Mammary epithelial cell (primary cell): ENCODE measurements at regions of chr16 and their contacts with region 1.

Region 1: DNA sequence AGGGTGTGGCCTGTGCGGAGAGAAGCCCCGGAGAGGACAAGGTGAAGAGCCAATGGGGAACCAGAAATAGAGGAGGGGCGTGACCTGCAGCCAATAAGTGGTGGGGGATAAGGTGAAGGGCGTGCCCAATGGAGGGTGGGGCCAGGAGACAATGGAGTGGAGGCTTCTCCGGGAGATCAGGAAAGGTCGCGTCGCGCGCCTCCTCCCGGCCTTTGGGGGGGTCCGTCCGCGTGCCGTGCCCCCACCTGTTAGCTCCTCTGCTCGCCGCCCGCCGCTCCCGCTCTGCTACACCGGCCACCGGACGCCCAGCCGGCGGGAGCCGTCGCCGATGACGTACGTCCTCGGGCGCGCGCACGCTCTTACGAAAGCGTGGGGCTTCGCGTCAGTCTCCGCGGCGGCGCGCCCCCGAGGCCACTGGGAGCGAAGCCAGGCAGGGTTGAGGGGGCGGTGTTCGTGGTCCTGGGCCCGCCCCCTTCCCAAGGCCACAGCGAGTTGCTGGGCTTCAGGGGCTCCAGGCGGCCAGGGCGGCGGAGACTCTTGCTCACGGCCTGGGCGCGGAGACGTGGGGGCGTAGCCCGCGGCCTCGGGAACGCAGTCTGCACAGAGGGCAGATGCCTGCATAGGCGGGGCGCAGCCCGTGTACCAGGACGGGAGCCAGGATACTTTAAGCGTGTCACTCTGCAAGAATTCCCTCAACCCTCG is at the start of gene MATCAP1:
- DNase-seq: peak; percentile 97
- H3K4me3 ChIP-seq: peak within 1 kb of the TSS; percentile 43 to 82 (median 69)
- H3K27ac ChIP-seq: peak within 1 kb of the TSS; percentile 76
- H3K4me1 ChIP-seq: peaks cover 49% of the 10 kb centered on the region
- H3K27me3 ChIP-seq: no peaks in the 10 kb centered on the region
- CTCF ChIP-seq: no peak
- total RNA-seq, gene MATCAP1: 8.0 to 24.9 TPM

Region 2: DNA sequence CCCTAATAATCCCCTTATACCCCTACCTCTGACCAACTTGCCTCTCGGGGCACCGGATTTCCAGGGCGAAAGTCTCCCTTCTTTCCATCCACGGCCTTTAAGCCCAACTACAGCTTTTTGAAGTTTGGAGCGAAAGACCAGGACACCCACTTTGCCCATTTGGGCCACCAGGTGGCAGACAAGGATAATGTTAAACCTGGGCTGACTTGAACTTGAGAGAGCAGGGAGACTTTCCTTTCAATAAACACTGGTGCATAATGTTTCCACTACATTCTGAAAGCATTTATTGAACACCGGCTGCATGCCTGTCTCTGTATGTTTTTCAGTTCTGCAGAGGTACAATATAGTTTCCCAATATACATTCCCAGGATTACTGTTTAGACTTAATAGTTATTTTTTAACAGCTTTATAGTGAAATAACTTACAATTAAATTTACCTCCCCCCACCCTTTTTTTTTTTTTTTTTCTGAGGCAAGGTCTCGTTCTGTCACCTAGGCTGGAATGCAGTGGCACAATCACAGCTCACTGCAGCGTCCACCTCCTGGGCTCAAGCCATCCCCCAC is 229.6 kb before region 1 on chr16:
- CTCF ChIA-PET with region 1: no interaction called
- dilution Hi-C with region 1: no loop called
- in situ Hi-C with region 1: no loop called
- intact Hi-C with region 1: loop called (anchors 2 kb)
- DNase-seq: peak; percentile 68
- H3K4me3 ChIP-seq: no peak overlapping the region
- H3K27ac ChIP-seq: no peak overlapping the region
- H3K4me1 ChIP-seq: peaks cover 16% of the 10 kb centered on the region
- H3K27me3 ChIP-seq: no peaks in the 10 kb centered on the region
- CTCF ChIP-seq: peak; percentile 83 to 86

Region 3: GRCh38 chr16:67137605-67138004 is 46.2 kb before region 1 on chr16:
- CTCF ChIA-PET with region 1: no interaction called
- dilution Hi-C with region 1: loop called (anchors 5 kb)
- in situ Hi-C with region 1: no loop called
- intact Hi-C with region 1: no loop called
- DNase-seq: no peak
- H3K4me3 ChIP-seq: no peak overlapping the region
- H3K27ac ChIP-seq: no peak overlapping the region
- H3K4me1 ChIP-seq: no peaks in the 10 kb centered on the region
- H3K27me3 ChIP-seq: no peaks in the 10 kb centered on the region
- CTCF ChIP-seq: no peak

Region 4: DNA sequence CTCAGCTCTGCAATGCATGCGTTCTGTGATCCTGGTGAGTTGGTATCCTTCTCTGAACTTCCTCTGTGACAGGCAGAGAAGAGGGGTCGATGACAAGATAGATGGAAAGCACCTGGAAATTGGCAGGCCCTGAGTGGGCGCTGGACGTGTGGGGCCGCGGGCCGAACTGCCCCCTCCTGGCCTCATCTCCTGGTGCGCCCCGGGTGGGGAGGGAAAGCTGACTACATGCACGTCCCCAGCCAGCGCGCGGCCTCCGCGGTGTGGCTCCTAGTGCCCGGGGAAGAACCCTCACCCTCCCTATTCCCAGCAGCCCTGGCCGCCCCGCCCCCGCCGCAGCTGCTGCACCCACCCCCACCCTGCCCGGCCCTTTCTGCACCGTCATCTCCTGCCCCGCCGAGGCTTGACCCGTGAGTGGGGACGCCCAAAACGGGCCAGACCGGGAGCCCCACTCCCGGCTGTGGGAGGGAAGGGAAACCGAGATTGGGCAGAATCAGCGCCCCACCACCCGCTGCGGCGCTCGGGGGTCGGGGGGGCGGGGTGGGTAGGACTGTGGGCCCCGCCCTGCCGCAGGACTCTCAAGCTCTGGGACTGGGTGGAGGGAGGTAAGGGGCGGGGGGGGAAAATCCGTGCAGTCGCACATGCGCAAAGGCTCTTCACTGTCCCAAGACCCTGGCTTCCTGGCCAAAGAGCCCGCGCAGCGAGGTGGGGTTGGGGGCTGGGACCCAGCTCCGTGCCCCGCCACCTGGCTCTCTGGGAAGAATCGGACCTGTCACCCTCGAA is 13.4 kb before region 1 on chr16 and contains the start of gene NOL3:
- CTCF ChIA-PET with region 1: interaction called, 10 read pairs
- dilution Hi-C with region 1: no loop called
- in situ Hi-C with region 1: no loop called
- intact Hi-C with region 1: no loop called
- DNase-seq: peak; percentile 73
- H3K4me3 ChIP-seq: peak within 1 kb of the TSS; percentile 49 to 58 (median 54)
- H3K27ac ChIP-seq: peak within 1 kb of the TSS; percentile 70
- H3K4me1 ChIP-seq: peaks cover 47% of the 10 kb centered on the region
- H3K27me3 ChIP-seq: no peaks in the 10 kb centered on the region
- CTCF ChIP-seq: no peak
- total RNA-seq, gene NOL3: 30.0 to 41.9 TPM